ENCODE measurements at regions of chr10 and their contacts with region 1.

Region 1: GRCh38 chr10:79562135-79562756 is 2.0 kb upstream of the SFTPA2 start:
- DNase-seq: peak; percentile 54 to 73
- ATAC-seq: peak in 3 of 4 donors; percentile 52 to 73 (median 63)
- H3K4me3 ChIP-seq: no peak overlapping the region
- H3K27ac ChIP-seq: no peak overlapping the region
- H3K4me1 ChIP-seq: no peaks in the 10 kb centered on the region
- H3K27me3 ChIP-seq: peaks cover 0 to 9% (median 0%) of the 10 kb centered on the region in 3 donors
- CTCF ChIP-seq: peak; percentile 75

Region 2: GRCh38 chr10:79929409-79929904 is 367.2 kb after region 1 on chr10:
- intact Hi-C with region 1: loop called (anchors 5 kb)
- DNase-seq: peak; percentile 79 to 90
- ATAC-seq: peak; percentile 93 to 99 (median 96)
- H3K4me3 ChIP-seq: no peak overlapping the region
- H3K27ac ChIP-seq: no peak overlapping the region
- H3K4me1 ChIP-seq: no peaks in the 10 kb centered on the region
- H3K27me3 ChIP-seq: no peaks in the 10 kb centered on the region
- CTCF ChIP-seq: peak; percentile 96

Measured in psoas muscle (tissue), 8 donors.